ENCODE measurements at regions of chr1 and their contacts with region 1.

Region 1: DNA sequence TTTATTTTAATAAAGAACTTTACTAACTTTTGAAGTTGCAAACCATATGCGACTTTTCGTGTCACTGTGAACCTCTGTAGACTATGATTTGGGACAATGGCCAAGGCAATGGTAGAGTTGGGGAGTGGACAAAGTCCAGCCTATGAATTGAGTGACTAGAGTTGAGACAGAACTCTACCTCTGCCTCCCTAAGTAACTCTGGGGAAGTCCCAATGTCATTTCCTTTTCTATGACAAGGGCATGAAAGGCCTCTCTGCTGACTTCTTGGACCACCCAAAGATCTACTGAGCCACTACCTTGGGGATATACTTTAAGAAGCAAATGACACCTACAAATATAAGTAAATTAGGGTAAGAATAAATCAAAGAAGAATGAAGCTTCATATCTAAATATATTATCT is 19.3 kb downstream of the BEND5 start:
- DNase-seq: no peak
- ATAC-seq: peak; percentile 65
- H3K4me3 Mint-ChIP-seq: no peak overlapping the region
- H3K27ac Mint-ChIP-seq: peak overlapping the region; percentile 77
- H3K4me1 Mint-ChIP-seq: peaks cover 77% of the 10 kb centered on the region
- H3K27me3 Mint-ChIP-seq: no peaks in the 10 kb centered on the region
- CTCF ChIP-seq: no peak

Region 2: GRCh38 chr1:48498096-48498791 is 259.1 kb before region 1 on chr1:
- CTCF ChIA-PET with region 1: no interaction called
- POLR2A ChIA-PET with region 1: no interaction called
- intact Hi-C with region 1: no loop called
- DNase-seq: peak; percentile 32
- ATAC-seq: peak; percentile 77
- H3K4me3 Mint-ChIP-seq: no peak overlapping the region
- H3K27ac Mint-ChIP-seq: no peak overlapping the region
- H3K4me1 Mint-ChIP-seq: peaks cover 4% of the 10 kb centered on the region
- H3K27me3 Mint-ChIP-seq: peaks cover 3% of the 10 kb centered on the region
- CTCF ChIP-seq: peak; percentile 85

Region 3: DNA sequence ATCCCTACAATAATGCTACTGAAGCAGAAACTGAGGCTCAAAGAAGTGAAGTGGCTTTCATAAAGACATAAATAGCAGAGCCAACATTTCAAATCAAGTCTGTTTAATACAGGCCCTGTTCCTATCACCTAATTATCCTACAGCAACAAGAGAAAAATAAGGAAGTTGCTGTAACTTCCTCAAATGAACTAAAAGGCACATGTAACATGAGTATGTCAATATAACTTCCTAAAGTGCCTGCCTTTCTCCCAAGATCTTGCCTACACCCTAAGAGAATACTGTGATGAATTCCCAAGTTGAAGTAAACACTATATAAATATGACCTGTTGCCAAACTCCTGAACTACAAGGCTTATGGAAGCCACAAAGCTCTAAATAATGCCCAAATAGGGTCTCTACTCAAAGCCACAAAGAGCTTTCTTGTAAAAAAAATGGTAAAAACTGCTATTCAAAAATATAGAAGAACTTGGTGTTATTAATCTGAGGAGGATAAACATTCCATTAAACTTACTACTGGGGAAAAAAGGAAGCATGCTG is 10.7 kb after region 1 on chr1:
- CTCF ChIA-PET with region 1: no interaction called
- POLR2A ChIA-PET with region 1: interaction called, 3 read pairs
- intact Hi-C with region 1: loop called (anchors 1 kb)
- DNase-seq: no peak
- ATAC-seq: peak; percentile 79
- H3K4me3 Mint-ChIP-seq: peak overlapping the region; percentile 44
- H3K27ac Mint-ChIP-seq: peak overlapping the region; percentile 80
- H3K4me1 Mint-ChIP-seq: peaks cover 93% of the 10 kb centered on the region
- H3K27me3 Mint-ChIP-seq: no peaks in the 10 kb centered on the region
- CTCF ChIP-seq: no peak

Region 4: DNA sequence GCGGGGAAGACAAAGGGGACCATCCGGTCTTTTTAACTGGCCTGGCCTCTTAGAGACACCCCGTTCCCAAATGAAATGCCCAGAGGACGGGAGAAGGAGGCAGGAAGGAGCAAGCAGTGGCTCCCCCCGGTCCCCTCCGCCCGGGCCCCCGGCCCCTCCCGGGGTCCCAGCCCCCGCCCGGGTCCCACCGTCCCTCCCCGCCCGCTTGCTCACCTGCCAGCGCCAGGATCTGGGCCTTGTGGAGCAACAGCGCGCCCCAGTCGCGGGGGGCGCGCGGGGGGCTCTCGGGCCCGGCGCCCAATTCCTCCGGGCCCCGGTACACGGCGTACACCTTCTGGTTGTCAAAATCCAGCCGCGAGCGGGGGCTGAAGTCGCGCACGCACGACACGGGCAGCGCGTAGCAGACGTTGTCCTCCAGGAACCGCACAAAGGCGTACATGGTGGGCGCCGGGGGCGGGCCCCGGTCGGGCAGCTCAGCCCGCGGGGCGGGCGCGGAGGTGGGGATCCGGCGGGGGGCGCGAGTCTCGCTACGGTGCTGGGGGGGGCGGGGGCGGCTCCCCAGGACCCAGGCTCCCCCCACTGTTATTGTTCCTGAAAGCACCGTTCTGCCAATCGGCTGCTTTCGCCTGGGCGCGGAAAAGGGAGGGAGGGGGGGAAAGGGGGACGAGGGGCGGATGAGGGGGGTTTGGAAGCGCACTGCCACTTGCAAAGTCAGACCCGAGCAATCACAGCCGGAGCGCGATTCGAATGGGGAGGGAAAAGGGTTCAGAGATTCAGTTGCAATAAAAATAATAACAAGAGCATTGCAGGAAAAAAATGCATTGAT is 19.2 kb after region 1 on chr1 and contains the start of gene BEND5:
- CTCF ChIA-PET with region 1: interaction called, 4 read pairs
- POLR2A ChIA-PET with region 1: interaction called, 5 read pairs
- intact Hi-C with region 1: loop called (anchors 2 kb)
- DNase-seq: peak; percentile 65
- ATAC-seq: peak; percentile 82
- H3K4me3 Mint-ChIP-seq: peak within 1 kb of the TSS; percentile 94
- H3K27ac Mint-ChIP-seq: peak within 1 kb of the TSS; percentile 92
- H3K4me1 Mint-ChIP-seq: peaks cover 67% of the 10 kb centered on the region
- H3K27me3 Mint-ChIP-seq: no peaks in the 10 kb centered on the region
- CTCF ChIP-seq: no peak
- total RNA-seq, gene BEND5: 14.5 and 17.9 TPM in 2 replicates

Measured in activated B cell treated with CpG ODN at 0.5 μM for 24 hours (primary cell).